Posterior vena cava (tissue), 2 donors: ENCODE measurements at regions of chr2 and their contacts with region 1.

Region 1: GRCh38 chr2:219976871-219977270 is 349.4 kb downstream of the SLC4A3 start:
- DNase-seq: no peak

Region 2: GRCh38 chr2:219965287-219966194 is 11.3 kb before region 1 on chr2:
- intact Hi-C with region 1: loop called in 1 of 2 experiments (anchors 1 kb)
- DNase-seq: no peak

Region 3: GRCh38 chr2:220117025-220117424 is 140.2 kb after region 1 on chr2:
- intact Hi-C with region 1: no loop called
- DNase-seq: no peak